ENCODE measurements at regions of chr5 and their contacts with region 1.

Region 1: DNA sequence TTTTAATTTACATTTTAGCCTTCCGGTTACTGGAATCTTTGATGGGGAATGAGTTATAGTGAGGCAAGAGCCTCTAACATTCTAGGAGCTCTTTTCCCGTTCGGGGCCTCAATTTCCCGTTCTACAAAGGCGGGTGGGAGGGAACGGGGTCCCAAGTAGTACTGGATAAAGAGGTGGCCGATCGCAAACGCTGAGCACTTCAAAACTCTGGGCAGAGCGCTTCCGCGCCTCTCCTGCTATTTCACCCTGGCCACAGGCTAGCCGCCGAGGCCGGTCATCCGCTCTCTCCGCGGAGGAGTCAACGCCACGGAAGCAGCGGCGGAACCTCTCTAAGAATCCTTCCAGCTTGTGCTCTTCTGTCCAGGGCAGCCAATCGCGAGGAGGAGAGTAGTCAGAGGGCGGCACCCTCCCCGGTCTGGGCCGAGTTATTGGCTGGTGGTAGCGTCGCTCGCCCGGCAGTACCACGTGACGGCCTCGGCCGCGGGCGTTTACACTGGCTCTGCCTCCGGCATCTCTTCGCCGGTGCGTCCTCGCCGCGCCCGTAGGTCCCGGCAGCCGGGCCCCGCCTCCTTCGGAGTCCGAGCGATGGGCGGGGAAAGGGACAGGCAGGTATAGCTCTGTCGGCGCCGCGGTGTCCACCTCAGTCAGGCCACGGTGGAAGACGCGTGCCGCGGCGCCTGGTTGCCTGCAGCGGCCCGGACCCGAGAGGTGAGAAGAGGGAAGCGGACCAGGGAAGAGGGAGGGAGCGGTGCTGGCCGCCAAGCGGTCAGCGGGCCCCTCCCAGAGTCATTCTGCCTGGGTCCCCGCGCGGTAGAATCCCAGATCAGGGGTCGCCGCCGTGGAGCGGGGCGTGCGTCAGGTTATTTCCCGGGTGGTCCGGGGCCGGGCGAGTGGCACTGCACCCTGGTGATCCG is at the start of gene SLC26A2:
- DNase-seq: peak; percentile 96
- H3K4me3 ChIP-seq: peak within 1 kb of the TSS; percentile 73 to 77
- H3K27ac ChIP-seq: peak within 1 kb of the TSS; percentile 87 to 94
- H3K4me1 ChIP-seq: peaks cover 10 to 12% of the 10 kb centered on the region in 2 experiments; a peak in 3 of 4 replicates
- H3K27me3 ChIP-seq: no peaks in the 10 kb centered on the region
- CTCF ChIP-seq: no peak; the same call in 1 of the 2 replicates
- EP300 ChIP-seq: peak in 1 of 2 experiments; percentile 22; a peak in 1 of 4 replicates
- RAD21 ChIP-seq: no peak
- polyA plus RNA-seq, gene SLC26A2: 1.3 and 1.9 TPM in 2 replicates

Region 2: GRCh38 chr5:149636851-149637246 is 323.7 kb before region 1 on chr5:
- CTCF ChIA-PET with region 1: interaction called, 12 read pairs
- POLR2A ChIA-PET with region 1: no interaction called
- DNase-seq: peak; percentile 81
- H3K4me3 ChIP-seq: peak overlapping the region in 1 of 2 experiments; percentile 43; a peak in 1 of 4 replicates
- H3K27ac ChIP-seq: no peak overlapping the region
- H3K4me1 ChIP-seq: peaks cover 0 to 12% of the 10 kb centered on the region in 2 experiments; a peak in 1 of 4 replicates
- H3K27me3 ChIP-seq: no peaks in the 10 kb centered on the region
- CTCF ChIP-seq: peak; percentile 84
- EP300 ChIP-seq: no peak
- RAD21 ChIP-seq: peak; percentile 99

Region 3: GRCh38 chr5:149646564-149646963 is 314.0 kb before region 1 on chr5:
- CTCF ChIA-PET with region 1: interaction called, 11 read pairs
- POLR2A ChIA-PET with region 1: no interaction called
- DNase-seq: peak; percentile 80
- H3K4me3 ChIP-seq: no peak overlapping the region
- H3K27ac ChIP-seq: peak overlapping the region in 1 of 2 experiments; percentile 72; a peak in 2 of 4 replicates
- H3K4me1 ChIP-seq: peaks cover 0 to 14% of the 10 kb centered on the region in 2 experiments; a peak in 1 of 4 replicates
- H3K27me3 ChIP-seq: no peaks in the 10 kb centered on the region
- CTCF ChIP-seq: no peak
- EP300 ChIP-seq: peak in 1 of 2 experiments; percentile 35; a peak in 1 of 4 replicates
- RAD21 ChIP-seq: no peak

Region 4: GRCh38 chr5:149834246-149834855 is 126.2 kb before region 1 on chr5:
- CTCF ChIA-PET with region 1: interaction called, 244 read pairs
- POLR2A ChIA-PET with region 1: interaction called, 4 read pairs
- DNase-seq: peak; percentile 81
- H3K4me3 ChIP-seq: no peak overlapping the region
- H3K27ac ChIP-seq: no peak overlapping the region
- H3K4me1 ChIP-seq: no peaks in the 10 kb centered on the region
- H3K27me3 ChIP-seq: no peaks in the 10 kb centered on the region
- CTCF ChIP-seq: peak; percentile 81
- EP300 ChIP-seq: no peak
- RAD21 ChIP-seq: peak; percentile 89

Region 5: GRCh38 chr5:149846021-149846420 is 114.5 kb before region 1 on chr5:
- CTCF ChIA-PET with region 1: interaction called, 12 read pairs
- POLR2A ChIA-PET with region 1: no interaction called
- DNase-seq: no peak
- H3K4me3 ChIP-seq: no peak overlapping the region
- H3K27ac ChIP-seq: no peak overlapping the region
- H3K4me1 ChIP-seq: no peaks in the 10 kb centered on the region
- H3K27me3 ChIP-seq: no peaks in the 10 kb centered on the region
- CTCF ChIP-seq: no peak
- EP300 ChIP-seq: no peak
- RAD21 ChIP-seq: no peak

Region 6: DNA sequence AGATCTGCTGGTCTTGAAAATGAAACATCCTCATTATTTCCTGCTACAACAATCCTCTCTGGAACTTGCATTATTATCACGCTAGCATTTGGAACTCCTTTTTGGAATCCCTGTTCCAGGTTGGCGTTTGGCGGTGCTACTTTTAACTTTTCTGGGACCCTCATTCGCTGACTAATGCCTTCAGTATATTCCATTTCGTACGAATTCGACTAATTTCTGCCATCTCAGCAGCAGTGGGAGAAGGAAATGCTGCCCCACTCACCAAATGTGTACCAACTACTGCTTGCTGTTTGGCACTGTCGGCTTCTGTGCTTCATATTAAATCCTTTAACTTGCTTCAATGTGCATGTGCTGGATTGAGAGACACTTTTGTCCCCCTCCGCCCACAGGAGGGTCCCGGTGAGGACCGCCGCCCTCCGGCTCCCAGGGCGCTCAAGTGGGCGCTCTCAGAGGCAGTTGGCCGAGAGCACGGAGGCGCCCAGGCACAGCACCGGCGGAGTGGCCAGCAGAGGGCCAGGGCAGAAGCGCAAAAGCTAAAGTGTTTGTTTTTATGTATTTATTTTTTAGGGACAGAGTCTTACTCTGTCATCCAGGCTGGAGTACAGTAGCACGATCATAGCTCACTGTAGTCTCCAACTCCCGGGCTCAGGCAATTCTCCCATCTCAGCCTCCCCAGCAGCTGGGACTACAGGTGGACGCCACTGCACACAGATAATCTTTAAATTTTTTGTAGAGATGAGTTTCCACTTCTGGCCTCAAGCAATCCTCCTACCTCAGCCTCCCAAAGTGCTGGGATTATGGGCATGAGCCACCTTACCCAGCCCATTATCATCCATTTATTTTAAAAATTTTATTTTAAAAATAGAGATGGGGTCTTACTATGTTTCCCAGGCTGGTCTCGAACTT is 27.8 kb before region 1 on chr5:
- CTCF ChIA-PET with region 1: interaction called, 68 read pairs
- POLR2A ChIA-PET with region 1: no interaction called
- DNase-seq: peak; percentile 60
- H3K4me3 ChIP-seq: peak overlapping the region; percentile 41 to 57
- H3K27ac ChIP-seq: peak overlapping the region; percentile 45 to 76; a peak in 3 of 4 replicates
- H3K4me1 ChIP-seq: peaks cover 12 to 15% of the 10 kb centered on the region in 2 experiments; a peak in 3 of 4 replicates
- H3K27me3 ChIP-seq: no peaks in the 10 kb centered on the region
- CTCF ChIP-seq: peak; percentile 65
- EP300 ChIP-seq: no peak
- RAD21 ChIP-seq: peak; percentile 31; the same call in 1 of the 2 replicates

Region 7: DNA sequence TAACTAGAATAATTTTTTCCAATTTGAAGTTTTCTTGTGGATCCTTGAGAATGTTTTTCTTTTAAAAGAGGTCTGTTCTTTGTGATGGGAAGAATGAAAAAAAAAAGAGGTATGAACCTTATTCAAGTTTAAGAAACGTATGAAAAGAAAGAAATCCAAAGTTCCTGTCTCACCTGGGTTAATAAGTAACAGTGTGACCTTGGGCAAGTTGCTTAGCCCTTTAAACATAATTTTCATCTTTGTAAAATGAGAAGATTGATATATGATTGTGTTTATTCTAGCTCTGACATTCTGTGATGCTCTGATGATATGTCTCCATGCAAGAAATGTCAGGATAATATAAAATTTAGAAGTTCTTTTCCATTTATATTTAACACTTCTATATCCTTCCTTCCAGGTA is 19.4 kb after region 1 on chr5:
- CTCF ChIA-PET with region 1: interaction called, 16 read pairs
- POLR2A ChIA-PET with region 1: no interaction called
- DNase-seq: no peak
- H3K4me3 ChIP-seq: no peak overlapping the region
- H3K27ac ChIP-seq: no peak overlapping the region
- H3K4me1 ChIP-seq: no peaks in the 10 kb centered on the region
- H3K27me3 ChIP-seq: no peaks in the 10 kb centered on the region
- CTCF ChIP-seq: no peak
- EP300 ChIP-seq: no peak
- RAD21 ChIP-seq: no peak

Region 8: GRCh38 chr5:150036513-150036912 is 76.0 kb after region 1 on chr5:
- CTCF ChIA-PET with region 1: no interaction called
- POLR2A ChIA-PET with region 1: no interaction called
- DNase-seq: no peak
- H3K4me3 ChIP-seq: no peak overlapping the region
- H3K27ac ChIP-seq: peak overlapping the region; percentile 82 to 85
- H3K4me1 ChIP-seq: peaks cover 2 to 14% of the 10 kb centered on the region in 2 experiments; a peak in 3 of 4 replicates
- H3K27me3 ChIP-seq: no peaks in the 10 kb centered on the region
- CTCF ChIP-seq: no peak
- EP300 ChIP-seq: peak in 1 of 2 experiments; percentile 82; a peak in 2 of 4 replicates
- RAD21 ChIP-seq: no peak

Region 9: GRCh38 chr5:150058480-150059126 is 98.1 kb after region 1 on chr5:
- CTCF ChIA-PET with region 1: no interaction called
- POLR2A ChIA-PET with region 1: no interaction called
- DNase-seq: peak; percentile 57
- H3K4me3 ChIP-seq: no peak overlapping the region
- H3K27ac ChIP-seq: peak overlapping the region in 1 of 2 experiments; percentile 73; a peak in 3 of 4 replicates
- H3K4me1 ChIP-seq: peaks cover 4 to 14% of the 10 kb centered on the region in 2 experiments; a peak in 3 of 4 replicates
- H3K27me3 ChIP-seq: no peaks in the 10 kb centered on the region
- CTCF ChIP-seq: no peak
- EP300 ChIP-seq: peak in 1 of 2 experiments; percentile 30; a peak in 1 of 4 replicates
- RAD21 ChIP-seq: no peak

Measured in SK-N-SH (cell line).